Naive thymus-derived CD4-positive, alpha-beta T cell (primary cell): ENCODE measurements at regions of chr11 and their contacts with region 1.

Region 1: GRCh38 chr11:57530596-57531507 is at the start of gene TIMM10:
- DNase-seq: peak; percentile 71 to 98 (median 95)
- ATAC-seq: peak; percentile 95
- H3K4me3 ChIP-seq: peak within 1 kb of the TSS; percentile 73
- H3K4me3 Mint-ChIP-seq: peak within 1 kb of the TSS; percentile 86 to 95 (median 91)
- H3K27ac ChIP-seq: peak within 1 kb of the TSS; percentile 91
- H3K27ac Mint-ChIP-seq: peak within 1 kb of the TSS; percentile 87 to 98 (median 95)
- H3K4me1 ChIP-seq: peaks cover 15 to 17% of the 10 kb centered on the region in 2 donors
- H3K4me1 Mint-ChIP-seq: peaks cover 6 to 43% (median 33%) of the 10 kb centered on the region in 7 donors
- H3K27me3 ChIP-seq: no peaks in the 10 kb centered on the region
- H3K27me3 Mint-ChIP-seq: no peaks in the 10 kb centered on the region
- total RNA-seq, gene TIMM10: 23.7 to 52.8 (median 34.7) TPM

Region 2: GRCh38 chr11:57288771-57289579 is 241.9 kb before region 1 on chr11:
- CTCF ChIA-PET with region 1: no interaction called
- POLR2A ChIA-PET with region 1: no interaction called
- intact Hi-C with region 1: no loop called
- DNase-seq: no peak
- ATAC-seq: no peak
- H3K4me3 ChIP-seq: no peak overlapping the region
- H3K4me3 Mint-ChIP-seq: no peak overlapping the region
- H3K27ac ChIP-seq: no peak overlapping the region
- H3K27ac Mint-ChIP-seq: no peak overlapping the region
- H3K4me1 ChIP-seq: no peaks in the 10 kb centered on the region
- H3K4me1 Mint-ChIP-seq: no peaks in the 10 kb centered on the region
- H3K27me3 ChIP-seq: no peaks in the 10 kb centered on the region
- H3K27me3 Mint-ChIP-seq: peaks cover 0 to 22% (median 6%) of the 10 kb centered on the region in 5 donors

Region 3: GRCh38 chr11:57345555-57346211 is 185.2 kb before region 1 on chr11:
- CTCF ChIA-PET with region 1: interaction called, 6 read pairs
- POLR2A ChIA-PET with region 1: no interaction called
- intact Hi-C with region 1: loop called (anchors 1 kb)
- DNase-seq: peak; percentile 39 to 68 (median 62)
- ATAC-seq: peak; percentile 87
- H3K4me3 ChIP-seq: no peak overlapping the region
- H3K4me3 Mint-ChIP-seq: no peak overlapping the region
- H3K27ac ChIP-seq: no peak overlapping the region
- H3K27ac Mint-ChIP-seq: no peak overlapping the region
- H3K4me1 ChIP-seq: no peaks in the 10 kb centered on the region
- H3K4me1 Mint-ChIP-seq: peaks cover 0 to 10% (median 0%) of the 10 kb centered on the region in 7 donors
- H3K27me3 ChIP-seq: no peaks in the 10 kb centered on the region
- H3K27me3 Mint-ChIP-seq: no peaks in the 10 kb centered on the region

Region 4: GRCh38 chr11:57493507-57494503 is 37.0 kb before region 1 on chr11:
- CTCF ChIA-PET with region 1: interaction called, 286 read pairs
- POLR2A ChIA-PET with region 1: interaction called, 11 read pairs
- intact Hi-C with region 1: loop called (anchors 1 kb)
- DNase-seq: peak; percentile 51 to 77 (median 67)
- ATAC-seq: peak; percentile 89
- H3K4me3 ChIP-seq: no peak overlapping the region
- H3K4me3 Mint-ChIP-seq: no peak overlapping the region
- H3K27ac ChIP-seq: no peak overlapping the region
- H3K27ac Mint-ChIP-seq: peak overlapping the region in 1 of 9 donors; percentile 5
- H3K4me1 ChIP-seq: peaks cover 0 to 3% of the 10 kb centered on the region in 2 donors
- H3K4me1 Mint-ChIP-seq: peaks cover 0 to 11% (median 0%) of the 10 kb centered on the region in 7 donors
- H3K27me3 ChIP-seq: no peaks in the 10 kb centered on the region
- H3K27me3 Mint-ChIP-seq: peaks cover 0 to 3% (median 0%) of the 10 kb centered on the region in 5 donors

Region 5: GRCh38 chr11:57567515-57568329 is 36.9 kb after region 1 on chr11 and contains the start of gene UBE2L6:
- CTCF ChIA-PET with region 1: interaction called, 5 read pairs
- POLR2A ChIA-PET with region 1: interaction called, 13 read pairs
- intact Hi-C with region 1: loop called (anchors 1 kb)
- DNase-seq: peak; percentile 51 to 74 (median 67)
- ATAC-seq: peak; percentile 90
- H3K4me3 ChIP-seq: peak within 1 kb of the TSS; percentile 99
- H3K4me3 Mint-ChIP-seq: peak within 1 kb of the TSS; percentile 92 to 100 (median 99)
- H3K27ac ChIP-seq: peak within 1 kb of the TSS; percentile 97
- H3K27ac Mint-ChIP-seq: peak within 1 kb of the TSS; percentile 95 to 100 (median 98)
- H3K4me1 ChIP-seq: peaks cover 9 to 17% of the 10 kb centered on the region in 2 donors
- H3K4me1 Mint-ChIP-seq: peaks cover 37 to 65% (median 50%) of the 10 kb centered on the region in 7 donors
- H3K27me3 ChIP-seq: no peaks in the 10 kb centered on the region
- H3K27me3 Mint-ChIP-seq: no peaks in the 10 kb centered on the region
- total RNA-seq, gene UBE2L6: 51.1 to 326 (median 64.2) TPM

Region 6: GRCh38 chr11:57712256-57713150 is 181.7 kb after region 1 on chr11 and contains the start of gene TMX2:
- CTCF ChIA-PET with region 1: no interaction called
- POLR2A ChIA-PET with region 1: no interaction called
- intact Hi-C with region 1: loop called (anchors 1 kb)
- DNase-seq: peak; percentile 73 to 96 (median 91)
- ATAC-seq: peak; percentile 94
- H3K4me3 ChIP-seq: peak within 1 kb of the TSS; percentile 98
- H3K4me3 Mint-ChIP-seq: peak within 1 kb of the TSS; percentile 86 to 99 (median 98)
- H3K27ac ChIP-seq: peak within 1 kb of the TSS; percentile 95
- H3K27ac Mint-ChIP-seq: peak within 1 kb of the TSS; percentile 87 to 99 (median 95)
- H3K4me1 ChIP-seq: peaks cover 25 to 33% of the 10 kb centered on the region in 2 donors
- H3K4me1 Mint-ChIP-seq: peaks cover 14 to 61% (median 52%) of the 10 kb centered on the region in 7 donors
- H3K27me3 ChIP-seq: no peaks in the 10 kb centered on the region
- H3K27me3 Mint-ChIP-seq: no peaks in the 10 kb centered on the region
- total RNA-seq, gene TMX2: 43.0 to 67.3 (median 64.8) TPM

Region 7: GRCh38 chr11:59142530-59143507 is 1612.0 kb after region 1 on chr11 and contains the start of gene FAM111A:
- CTCF ChIA-PET with region 1: interaction called, 3 read pairs
- POLR2A ChIA-PET with region 1: no interaction called
- intact Hi-C with region 1: loop called in 1 of 2 experiments (anchors 5 kb)
- DNase-seq: peak; percentile 68 to 91 (median 89)
- ATAC-seq: peak; percentile 91
- H3K4me3 ChIP-seq: peak within 1 kb of the TSS; percentile 97
- H3K4me3 Mint-ChIP-seq: peak within 1 kb of the TSS; percentile 95 to 100 (median 98)
- H3K27ac ChIP-seq: peak within 1 kb of the TSS; percentile 81
- H3K27ac Mint-ChIP-seq: peak within 1 kb of the TSS; percentile 93 to 99 (median 97)
- H3K4me1 ChIP-seq: peaks cover 19 to 24% of the 10 kb centered on the region in 2 donors
- H3K4me1 Mint-ChIP-seq: peaks cover 42 to 70% (median 53%) of the 10 kb centered on the region in 7 donors
- H3K27me3 ChIP-seq: no peaks in the 10 kb centered on the region
- H3K27me3 Mint-ChIP-seq: no peaks in the 10 kb centered on the region
- total RNA-seq, gene FAM111A: 73.1 to 138 (median 117) TPM